GM12878 (cell line): ENCODE measurements at regions of chr11 and their contacts with region 1.

Region 1: GRCh38 chr11:19076744-19077589 is 16.4 kb upstream of the MRGPRX2 start:
- DNase-seq: no peak
- ATAC-seq: peak; percentile 89
- H3K4me3 ChIP-seq: no peak overlapping the region
- H3K27ac ChIP-seq: no peak overlapping the region
- H3K4me1 ChIP-seq: no peaks in the 10 kb centered on the region
- H3K27me3 ChIP-seq: no peaks in the 10 kb centered on the region; a peak in 1 of 4 replicates
- CTCF ChIP-seq: peak; percentile 86 to 98 (median 98)
- EP300 ChIP-seq: no peak
- POLR2A ChIP-seq: no peak
- RAD21 ChIP-seq: peak; percentile 59

Region 2: GRCh38 chr11:19101796-19102520 is 25.0 kb after region 1 on chr11:
- CTCF ChIA-PET with region 1: interaction called, 14 read pairs
- POLR2A ChIA-PET with region 1: no interaction called
- RAD21 ChIA-PET with region 1: no interaction called
- SMC1A ChIA-PET with region 1: interaction called, 3 read pairs
- in situ Hi-C with region 1: no loop called
- intact Hi-C with region 1: no loop called
- DNase-seq: no peak
- ATAC-seq: no peak
- H3K4me3 ChIP-seq: no peak overlapping the region
- H3K27ac ChIP-seq: no peak overlapping the region
- H3K4me1 ChIP-seq: no peaks in the 10 kb centered on the region
- H3K27me3 ChIP-seq: peaks cover 0 to 2% of the 10 kb centered on the region in 2 experiments; a peak in 1 of 4 replicates
- CTCF ChIP-seq: no peak
- EP300 ChIP-seq: no peak
- POLR2A ChIP-seq: no peak
- RAD21 ChIP-seq: no peak

Region 3: GRCh38 chr11:19116971-19117750 is 40.2 kb after region 1 on chr11 and contains the start of gene ZDHHC13:
- CTCF ChIA-PET with region 1: interaction called, 20 read pairs
- POLR2A ChIA-PET with region 1: no interaction called
- RAD21 ChIA-PET with region 1: interaction called, 8 read pairs
- SMC1A ChIA-PET with region 1: interaction called, 8 read pairs
- in situ Hi-C with region 1: no loop called
- intact Hi-C with region 1: loop called (anchors 5 kb)
- DNase-seq: peak; percentile 92
- ATAC-seq: peak; percentile 96
- H3K4me3 ChIP-seq: peak within 1 kb of the TSS; percentile 97
- H3K27ac ChIP-seq: peak within 1 kb of the TSS; percentile 80
- H3K4me1 ChIP-seq: peaks cover 14% of the 10 kb centered on the region
- H3K27me3 ChIP-seq: no peaks in the 10 kb centered on the region
- CTCF ChIP-seq: peak; percentile 34 to 44 (median 43); a peak in 5 of 6 replicates
- EP300 ChIP-seq: no peak
- POLR2A ChIP-seq: peak; percentile 98
- RAD21 ChIP-seq: no peak
- polyA plus RNA-seq, gene ZDHHC13: 8.5 to 9.6 TPM

Region 4: GRCh38 chr11:19240420-19241259 is 163.7 kb after region 1 on chr11 and contains the start of gene E2F8:
- CTCF ChIA-PET with region 1: interaction called, 8 read pairs
- POLR2A ChIA-PET with region 1: interaction called, 3 read pairs
- RAD21 ChIA-PET with region 1: interaction called, 4 read pairs
- SMC1A ChIA-PET with region 1: interaction called, 4 read pairs
- in situ Hi-C with region 1: no loop called
- intact Hi-C with region 1: loop called (anchors 5 kb)
- DNase-seq: peak; percentile 88
- ATAC-seq: peak; percentile 87
- H3K4me3 ChIP-seq: peak within 1 kb of the TSS; percentile 92
- H3K27ac ChIP-seq: peak within 1 kb of the TSS; percentile 91
- H3K4me1 ChIP-seq: peaks cover 22% of the 10 kb centered on the region
- H3K27me3 ChIP-seq: no peaks in the 10 kb centered on the region
- CTCF ChIP-seq: no peak
- EP300 ChIP-seq: peak in 1 of 2 experiments; percentile 64; a peak in 1 of 4 replicates
- POLR2A ChIP-seq: peak; percentile 20; the same call in 1 of the 2 replicates
- RAD21 ChIP-seq: no peak
- polyA plus RNA-seq, gene E2F8: 8.8 to 9.2 TPM

Region 5: GRCh38 chr11:19259487-19260345 is 182.7 kb after region 1 on chr11:
- CTCF ChIA-PET with region 1: interaction called, 38 read pairs
- POLR2A ChIA-PET with region 1: no interaction called
- RAD21 ChIA-PET with region 1: interaction called, 8 read pairs
- SMC1A ChIA-PET with region 1: interaction called, 8 read pairs
- in situ Hi-C with region 1: no loop called
- intact Hi-C with region 1: loop called (anchors 5 kb)
- DNase-seq: no peak
- ATAC-seq: peak; percentile 91
- H3K4me3 ChIP-seq: no peak overlapping the region
- H3K27ac ChIP-seq: no peak overlapping the region
- H3K4me1 ChIP-seq: no peaks in the 10 kb centered on the region; the same call in 1 of the 2 replicates
- H3K27me3 ChIP-seq: no peaks in the 10 kb centered on the region; a peak in 1 of 4 replicates
- CTCF ChIP-seq: peak; percentile 90 to 96 (median 93)
- EP300 ChIP-seq: no peak
- POLR2A ChIP-seq: no peak
- RAD21 ChIP-seq: peak; percentile 78